Vagina (tissue), 2 donors: ENCODE measurements at regions of chr13 and their contacts with region 1.

Region 1: GRCh38 chr13:61180234-61180633 is 235.4 kb downstream of the PCDH20 start:
- DNase-seq: no peak
- H3K4me3 ChIP-seq: no peak overlapping the region
- H3K27ac ChIP-seq: no peak overlapping the region
- H3K4me1 ChIP-seq: no peaks in the 10 kb centered on the region
- H3K27me3 ChIP-seq: no peaks in the 10 kb centered on the region
- CTCF ChIP-seq: no peak
- POLR2A ChIP-seq: no peak

Region 2: GRCh38 chr13:61135583-61135982 is 44.7 kb before region 1 on chr13:
- intact Hi-C with region 1: loop called (anchors 2 kb)
- DNase-seq: no peak
- H3K4me3 ChIP-seq: no peak overlapping the region
- H3K27ac ChIP-seq: no peak overlapping the region
- H3K4me1 ChIP-seq: no peaks in the 10 kb centered on the region
- H3K27me3 ChIP-seq: no peaks in the 10 kb centered on the region
- CTCF ChIP-seq: no peak
- POLR2A ChIP-seq: no peak